ENCODE measurements at regions of chr19 and their contacts with region 1.

Region 1: DNA sequence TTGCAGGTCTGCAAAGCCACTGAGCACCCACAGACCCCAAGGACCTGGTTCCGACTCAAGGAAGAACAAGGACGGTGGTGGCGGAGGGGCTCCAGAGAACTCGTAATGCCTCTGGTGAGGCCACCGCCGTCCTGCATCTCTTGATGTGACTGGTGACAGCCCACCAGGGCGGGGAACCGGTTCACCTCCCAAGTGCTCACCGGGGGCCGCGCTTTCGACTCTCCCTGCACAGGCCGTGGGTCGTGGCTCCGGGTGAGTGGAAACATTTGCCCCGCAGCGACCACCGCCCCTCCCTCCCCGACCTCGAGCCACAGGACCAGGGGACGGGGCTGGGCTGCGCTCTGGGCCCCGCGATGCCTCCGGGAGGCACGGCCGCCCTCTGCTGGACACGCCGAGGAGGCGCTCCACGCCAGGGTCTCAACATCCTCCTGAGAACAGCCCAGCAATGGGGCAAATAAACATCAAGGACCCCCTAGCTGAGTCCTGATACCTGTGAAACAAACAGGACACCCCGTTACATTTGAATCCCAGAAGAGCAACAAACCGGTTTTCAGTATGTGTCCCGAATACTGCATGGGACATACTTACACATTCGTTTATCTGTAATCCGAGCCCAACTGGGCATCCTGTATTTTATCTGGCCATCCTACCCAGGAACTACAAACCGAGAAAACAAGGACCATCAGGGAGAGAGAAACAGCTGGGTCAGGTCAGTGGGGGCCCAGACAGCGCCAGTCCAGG is 3.9 kb upstream of the PLPP2 start:
- DNase-seq: no peak
- H3K4me3 ChIP-seq: peak overlapping the region; percentile 32
- CTCF ChIP-seq: peak; percentile 97

Region 2: GRCh38 chr19:306151-306900 is 11.2 kb after region 1 on chr19:
- CTCF ChIA-PET with region 1: interaction called, 17 read pairs
- POLR2A ChIA-PET with region 1: interaction called, 5 read pairs
- DNase-seq: no peak
- H3K4me3 ChIP-seq: no peak overlapping the region
- CTCF ChIP-seq: no peak

Region 3: DNA sequence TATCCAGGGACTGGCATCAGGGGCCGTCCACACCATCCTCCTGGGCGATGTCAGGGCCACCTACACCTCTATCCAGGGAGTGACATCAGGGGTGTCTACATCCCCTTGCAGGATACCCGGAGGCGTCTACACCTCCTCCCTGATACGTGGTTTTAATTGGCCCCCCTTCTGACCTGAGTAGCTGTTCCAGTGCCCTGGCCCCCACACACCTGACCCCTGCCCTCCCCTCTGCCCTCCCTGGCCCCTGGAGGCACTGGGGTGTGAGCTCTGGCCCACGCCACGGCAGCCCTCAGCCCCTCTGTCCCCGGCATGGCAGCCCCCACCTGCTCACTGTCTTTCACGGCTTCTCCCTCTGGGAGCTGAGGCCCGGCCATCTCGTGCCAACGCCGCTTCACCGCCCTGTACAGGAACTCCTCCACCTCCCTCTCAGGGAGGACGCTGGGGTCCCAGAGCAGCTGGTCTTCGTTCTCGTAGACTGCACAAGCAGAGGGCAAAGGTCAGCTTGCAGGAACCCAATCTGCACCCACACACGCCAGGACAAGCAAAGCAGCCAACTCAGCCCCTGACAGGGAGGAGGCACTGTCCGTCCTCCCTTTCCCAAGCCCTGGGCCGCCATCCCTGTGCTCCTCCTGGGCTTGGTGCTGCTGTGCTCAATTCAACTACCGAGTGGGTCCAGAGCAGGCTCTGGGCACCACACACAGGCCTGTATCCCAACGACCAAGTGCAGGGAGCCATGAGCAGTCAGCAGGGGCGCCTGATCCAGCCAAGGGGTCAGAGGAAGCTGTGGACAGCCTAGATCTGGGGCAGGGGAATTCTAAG is 18.3 kb after region 1 on chr19:
- CTCF ChIA-PET with region 1: interaction called, 16 read pairs
- POLR2A ChIA-PET with region 1: interaction called, 5 read pairs
- DNase-seq: no peak
- H3K4me3 ChIP-seq: no peak overlapping the region
- CTCF ChIP-seq: no peak

Measured in AG04449 (cell line).